Heart left ventricle (tissue), 16 donors: ENCODE measurements at regions of chr1 and their contacts with region 1.

Region 1: DNA sequence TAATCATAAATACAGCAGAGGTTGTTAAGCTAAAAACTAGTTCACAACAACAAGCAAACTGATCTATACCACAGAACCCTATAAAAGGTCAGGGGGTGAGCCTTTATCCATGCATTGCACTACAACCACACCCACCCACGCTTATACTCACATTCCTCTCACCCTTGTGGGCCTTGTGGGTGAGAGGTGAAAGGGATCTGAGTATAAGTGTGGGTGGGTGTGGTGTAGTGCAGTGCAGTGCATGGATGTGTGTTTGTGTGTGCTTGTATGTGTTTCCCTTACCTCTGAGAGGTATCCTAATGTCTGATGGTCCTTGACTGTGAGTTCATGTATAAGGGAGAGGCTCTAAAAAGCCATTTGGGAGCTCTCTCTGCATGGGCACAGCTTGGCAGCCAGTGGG is 95.4 kb upstream of the DPT start:
- DNase-seq: no peak
- ATAC-seq: peak; percentile 12 to 52 (median 40)
- H3K4me3 ChIP-seq: no peak overlapping the region
- H3K27ac ChIP-seq: peak overlapping the region in 5 of 12 donors; percentile 3 to 43 (median 33)
- H3K4me1 ChIP-seq: peaks cover 0 to 17% (median 4%) of the 10 kb centered on the region in 12 donors
- H3K27me3 ChIP-seq: no peaks in the 10 kb centered on the region
- CTCF ChIP-seq: no peak
- POLR2A ChIP-seq: no peak

Region 2: GRCh38 chr1:168719306-168720111 is 104.9 kb before region 1 on chr1:
- intact Hi-C with region 1: loop called in 1 of 10 experiments (anchors 10 kb)
- DNase-seq: no peak
- ATAC-seq: no peak
- H3K4me3 ChIP-seq: no peak overlapping the region
- H3K27ac ChIP-seq: no peak overlapping the region
- H3K4me1 ChIP-seq: peaks cover 0 to 39% (median 5%) of the 10 kb centered on the region in 12 donors
- H3K27me3 ChIP-seq: no peaks in the 10 kb centered on the region
- CTCF ChIP-seq: no peak
- POLR2A ChIP-seq: no peak

Region 3: DNA sequence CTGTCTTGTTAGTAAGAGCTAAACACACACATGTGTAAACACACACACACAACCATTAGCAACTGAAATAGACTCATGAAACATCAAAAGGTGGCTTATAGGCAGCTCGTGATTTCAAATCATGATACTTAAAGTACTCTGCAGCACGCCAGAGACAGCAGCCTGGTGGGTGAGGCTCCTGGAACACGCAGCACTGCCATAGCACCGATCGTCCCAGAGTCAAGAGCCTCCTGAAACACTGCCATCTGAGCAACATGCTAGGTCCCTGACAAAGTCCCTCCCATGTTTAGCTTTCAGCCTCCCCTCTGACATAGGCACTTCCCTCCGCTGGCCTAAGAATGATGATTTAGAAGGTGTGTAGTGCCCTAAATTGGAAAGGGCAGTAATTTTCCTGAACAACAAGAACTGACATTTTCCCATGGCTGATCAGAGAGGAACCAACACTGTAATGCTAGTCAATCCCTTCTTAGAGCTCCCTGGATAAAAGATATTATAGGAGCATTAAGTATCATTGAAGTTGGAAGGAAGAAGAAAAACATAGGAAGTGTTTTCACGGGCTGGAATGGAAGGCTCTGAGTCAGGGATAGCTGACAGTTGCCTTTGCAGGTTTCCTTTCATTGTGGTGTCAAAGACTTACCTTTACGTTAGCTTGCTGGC is 81.3 kb before region 1 on chr1:
- intact Hi-C with region 1: no loop called
- DNase-seq: no peak
- ATAC-seq: peak; percentile 63 to 91 (median 79)
- H3K4me3 ChIP-seq: no peak overlapping the region
- H3K27ac ChIP-seq: no peak overlapping the region
- H3K4me1 ChIP-seq: peaks cover 0 to 8% (median 2%) of the 10 kb centered on the region in 12 donors
- H3K27me3 ChIP-seq: no peaks in the 10 kb centered on the region
- CTCF ChIP-seq: no peak
- POLR2A ChIP-seq: no peak

Region 4: GRCh38 chr1:168774241-168774640 is 50.2 kb before region 1 on chr1:
- intact Hi-C with region 1: loop called in 1 of 10 experiments (anchors 5 kb)
- DNase-seq: peak; percentile 61 to 83 (median 67)
- ATAC-seq: peak; percentile 85 to 99 (median 98)
- H3K4me3 ChIP-seq: no peak overlapping the region
- H3K27ac ChIP-seq: peak overlapping the region in 2 of 12 donors; percentile 28 to 30
- H3K4me1 ChIP-seq: peaks cover 0 to 21% (median 1%) of the 10 kb centered on the region in 12 donors
- H3K27me3 ChIP-seq: no peaks in the 10 kb centered on the region
- CTCF ChIP-seq: peak in 1 of 12 donors; percentile 3
- POLR2A ChIP-seq: no peak

Region 5: DNA sequence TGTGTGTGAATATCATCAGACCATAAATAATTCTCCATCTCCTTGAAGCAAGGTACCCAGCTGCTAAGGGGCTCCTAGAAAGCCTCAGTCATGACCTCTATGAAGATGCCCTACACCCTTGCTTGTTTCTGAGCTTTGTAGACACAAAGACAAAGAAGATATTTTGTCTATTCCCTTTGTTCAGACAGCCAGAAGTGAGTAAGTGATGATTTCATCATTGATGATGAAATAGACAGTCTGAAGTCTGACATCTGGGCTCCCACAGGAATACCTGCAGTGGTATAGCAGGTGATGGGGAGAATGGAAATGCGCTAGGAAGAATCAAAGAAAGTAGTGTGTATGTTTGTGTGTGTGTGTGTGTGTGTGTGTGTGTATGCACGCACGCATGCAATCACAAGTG is 13.2 kb before region 1 on chr1:
- intact Hi-C with region 1: loop called in 1 of 10 experiments (anchors 2 kb)
- DNase-seq: no peak
- ATAC-seq: no peak
- H3K4me3 ChIP-seq: no peak overlapping the region
- H3K27ac ChIP-seq: no peak overlapping the region
- H3K4me1 ChIP-seq: no peaks in the 10 kb centered on the region
- H3K27me3 ChIP-seq: no peaks in the 10 kb centered on the region
- CTCF ChIP-seq: no peak
- POLR2A ChIP-seq: no peak